ENCODE measurements at regions of chr3 and their contacts with region 1.

Region 1: GRCh38 chr3:134600685-134601463 is 49.9 kb downstream of the KY start:
- DNase-seq: peak; percentile 50 to 82
- H3K4me3 ChIP-seq: no peak overlapping the region
- H3K4me3 Mint-ChIP-seq: peak overlapping the region; percentile 28
- H3K27ac Mint-ChIP-seq: no peak overlapping the region
- H3K4me1 ChIP-seq: no peaks in the 10 kb centered on the region
- H3K4me1 Mint-ChIP-seq: no peaks in the 10 kb centered on the region
- H3K27me3 ChIP-seq: no peaks in the 10 kb centered on the region
- H3K27me3 Mint-ChIP-seq: peaks cover 14% of the 10 kb centered on the region
- CTCF ChIP-seq: peak; percentile 91 to 97

Region 2: DNA sequence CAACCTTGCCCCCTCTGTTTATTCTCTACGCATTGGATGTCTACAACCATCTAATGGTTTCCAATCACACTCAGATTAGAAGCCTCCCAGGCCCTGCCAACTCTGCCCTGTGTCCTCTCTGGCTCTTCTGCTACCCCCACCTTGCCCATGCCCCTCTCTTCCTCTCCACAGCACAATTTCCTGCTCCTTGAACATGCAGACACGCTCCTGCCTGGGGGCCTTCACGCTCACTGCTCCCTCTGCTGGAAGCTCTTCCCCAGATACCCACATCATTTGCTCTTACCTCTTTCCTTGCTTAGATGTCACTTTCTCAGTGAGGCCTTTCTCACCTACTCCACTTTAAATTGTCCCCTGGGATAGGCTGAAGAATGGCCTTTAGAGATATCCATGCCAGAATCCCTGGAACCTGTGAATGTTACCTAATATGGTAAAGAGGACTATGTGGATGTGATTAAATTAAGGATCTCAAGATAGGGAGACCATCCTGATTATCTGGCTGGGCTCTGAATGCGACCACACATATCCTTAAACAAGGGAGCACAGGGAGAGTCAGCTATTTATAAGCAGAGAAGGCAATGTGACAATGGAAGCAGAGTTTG is 40.1 kb after region 1 on chr3:
- CTCF ChIA-PET with region 1: interaction called, 6 read pairs
- POLR2A ChIA-PET with region 1: no interaction called
- intact Hi-C with region 1: loop called (anchors 1 kb)
- DNase-seq: peak in 1 of 2 experiments; percentile 38
- H3K4me3 ChIP-seq: no peak overlapping the region
- H3K4me3 Mint-ChIP-seq: no peak overlapping the region
- H3K27ac Mint-ChIP-seq: no peak overlapping the region
- H3K4me1 ChIP-seq: no peaks in the 10 kb centered on the region
- H3K4me1 Mint-ChIP-seq: no peaks in the 10 kb centered on the region
- H3K27me3 ChIP-seq: no peaks in the 10 kb centered on the region
- H3K27me3 Mint-ChIP-seq: peaks cover 7% of the 10 kb centered on the region
- CTCF ChIP-seq: peak; percentile 70 to 72

Region 3: GRCh38 chr3:134677196-134677986 is 76.5 kb after region 1 on chr3:
- CTCF ChIA-PET with region 1: no interaction called
- POLR2A ChIA-PET with region 1: no interaction called
- intact Hi-C with region 1: loop called (anchors 2 kb)
- DNase-seq: peak in 1 of 2 experiments; percentile 28
- H3K4me3 ChIP-seq: no peak overlapping the region
- H3K4me3 Mint-ChIP-seq: no peak overlapping the region
- H3K27ac Mint-ChIP-seq: no peak overlapping the region
- H3K4me1 ChIP-seq: no peaks in the 10 kb centered on the region
- H3K4me1 Mint-ChIP-seq: no peaks in the 10 kb centered on the region
- H3K27me3 ChIP-seq: no peaks in the 10 kb centered on the region
- H3K27me3 Mint-ChIP-seq: peaks cover 25% of the 10 kb centered on the region
- CTCF ChIP-seq: peak in 1 of 2 experiments; percentile 27

Region 4: GRCh38 chr3:134754768-134755559 is 154.1 kb after region 1 on chr3:
- CTCF ChIA-PET with region 1: interaction called, 7 read pairs
- POLR2A ChIA-PET with region 1: no interaction called
- intact Hi-C with region 1: loop called (anchors 2 kb)
- DNase-seq: peak; percentile 49 to 56
- H3K4me3 ChIP-seq: no peak overlapping the region
- H3K4me3 Mint-ChIP-seq: no peak overlapping the region
- H3K27ac Mint-ChIP-seq: no peak overlapping the region
- H3K4me1 ChIP-seq: no peaks in the 10 kb centered on the region
- H3K4me1 Mint-ChIP-seq: no peaks in the 10 kb centered on the region
- H3K27me3 ChIP-seq: no peaks in the 10 kb centered on the region; the same call in 1 of the 2 replicates
- H3K27me3 Mint-ChIP-seq: no peaks in the 10 kb centered on the region
- CTCF ChIP-seq: peak; percentile 52 to 63

Region 5: GRCh38 chr3:134794950-134795745 is 194.3 kb after region 1 on chr3 and contains the start of gene EPHB1:
- CTCF ChIA-PET with region 1: interaction called, 8 read pairs
- POLR2A ChIA-PET with region 1: no interaction called
- intact Hi-C with region 1: loop called (anchors 5 kb)
- DNase-seq: peak; percentile 83 to 88
- H3K4me3 ChIP-seq: peak within 1 kb of the TSS; percentile 53
- H3K4me3 Mint-ChIP-seq: peak within 1 kb of the TSS; percentile 96
- H3K27ac Mint-ChIP-seq: no peak within 1 kb of the TSS
- H3K4me1 ChIP-seq: no peaks in the 10 kb centered on the region; the same call in 1 of the 2 replicates
- H3K4me1 Mint-ChIP-seq: no peaks in the 10 kb centered on the region
- H3K27me3 ChIP-seq: peaks cover 3% of the 10 kb centered on the region
- H3K27me3 Mint-ChIP-seq: peaks cover 21% of the 10 kb centered on the region
- CTCF ChIP-seq: peak; percentile 86 to 94
- total RNA-seq, gene EPHB1: 2.3 and 4.6 TPM in 2 replicates

Region 6: DNA sequence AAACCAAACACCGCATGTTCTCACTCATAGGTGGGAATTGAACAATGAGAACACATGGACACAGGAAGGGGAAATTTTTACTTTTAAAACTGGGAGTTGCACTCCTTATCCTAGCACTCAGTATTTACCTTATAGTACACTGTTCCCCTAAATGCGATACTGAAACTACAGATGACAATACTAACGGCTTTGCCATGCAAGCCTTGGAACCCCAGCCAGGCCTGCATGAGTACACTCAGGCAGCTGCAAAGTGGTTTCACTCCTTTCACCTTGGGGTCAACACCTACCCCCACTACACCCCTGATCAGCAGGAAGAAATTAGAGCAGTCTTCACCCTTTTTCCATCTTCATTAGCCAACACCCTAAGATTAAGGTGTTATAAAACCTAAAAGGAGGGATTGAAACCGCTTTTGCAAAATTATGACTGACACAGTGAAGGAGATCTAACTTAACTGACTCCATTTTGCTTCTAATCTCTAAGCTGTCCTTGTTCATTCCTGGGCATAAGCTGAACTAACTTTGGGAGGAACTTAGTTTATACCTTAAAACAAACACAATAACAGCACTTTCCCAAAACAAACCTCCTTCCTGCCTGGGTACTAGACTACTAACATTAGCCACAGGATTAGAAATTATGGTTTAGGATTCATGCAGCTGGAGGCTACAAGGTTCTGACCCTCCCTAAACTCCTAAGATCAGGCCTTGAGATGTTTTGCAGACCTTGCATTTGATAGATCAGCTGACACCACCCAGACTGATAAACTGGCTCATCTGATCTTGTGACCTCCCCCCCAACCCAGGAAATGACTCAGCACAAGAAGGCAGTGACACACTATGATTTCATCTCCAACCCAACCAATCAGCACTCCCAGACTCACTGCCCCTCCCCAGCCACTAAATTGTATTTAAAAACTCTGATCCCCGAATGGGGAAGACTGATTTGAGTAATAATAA is 912.5 kb after region 1 on chr3:
- CTCF ChIA-PET with region 1: no interaction called
- POLR2A ChIA-PET with region 1: no interaction called
- intact Hi-C with region 1: loop called (anchors 2 kb)
- DNase-seq: peak; percentile 1 to 37
- H3K4me3 ChIP-seq: no peak overlapping the region
- H3K4me3 Mint-ChIP-seq: no peak overlapping the region
- H3K27ac Mint-ChIP-seq: peak overlapping the region; percentile 33
- H3K4me1 ChIP-seq: no peaks in the 10 kb centered on the region
- H3K4me1 Mint-ChIP-seq: no peaks in the 10 kb centered on the region
- H3K27me3 ChIP-seq: no peaks in the 10 kb centered on the region
- H3K27me3 Mint-ChIP-seq: peaks cover 9% of the 10 kb centered on the region
- CTCF ChIP-seq: no peak

Region 7: GRCh38 chr3:135895106-135895733 is 1294.3 kb after region 1 on chr3:
- CTCF ChIA-PET with region 1: no interaction called
- POLR2A ChIA-PET with region 1: no interaction called
- intact Hi-C with region 1: loop called (anchors 5 kb)
- DNase-seq: peak; percentile 63 to 73
- H3K4me3 ChIP-seq: no peak overlapping the region
- H3K4me3 Mint-ChIP-seq: no peak overlapping the region
- H3K27ac Mint-ChIP-seq: no peak overlapping the region
- H3K4me1 ChIP-seq: peaks cover 16% of the 10 kb centered on the region
- H3K4me1 Mint-ChIP-seq: peaks cover 24% of the 10 kb centered on the region
- H3K27me3 ChIP-seq: no peaks in the 10 kb centered on the region
- H3K27me3 Mint-ChIP-seq: peaks cover 7% of the 10 kb centered on the region
- CTCF ChIP-seq: peak; percentile 62 to 84